MCF 10A (cell line): ENCODE measurements at regions of chr11 and their contacts with region 1.

Region 1: DNA sequence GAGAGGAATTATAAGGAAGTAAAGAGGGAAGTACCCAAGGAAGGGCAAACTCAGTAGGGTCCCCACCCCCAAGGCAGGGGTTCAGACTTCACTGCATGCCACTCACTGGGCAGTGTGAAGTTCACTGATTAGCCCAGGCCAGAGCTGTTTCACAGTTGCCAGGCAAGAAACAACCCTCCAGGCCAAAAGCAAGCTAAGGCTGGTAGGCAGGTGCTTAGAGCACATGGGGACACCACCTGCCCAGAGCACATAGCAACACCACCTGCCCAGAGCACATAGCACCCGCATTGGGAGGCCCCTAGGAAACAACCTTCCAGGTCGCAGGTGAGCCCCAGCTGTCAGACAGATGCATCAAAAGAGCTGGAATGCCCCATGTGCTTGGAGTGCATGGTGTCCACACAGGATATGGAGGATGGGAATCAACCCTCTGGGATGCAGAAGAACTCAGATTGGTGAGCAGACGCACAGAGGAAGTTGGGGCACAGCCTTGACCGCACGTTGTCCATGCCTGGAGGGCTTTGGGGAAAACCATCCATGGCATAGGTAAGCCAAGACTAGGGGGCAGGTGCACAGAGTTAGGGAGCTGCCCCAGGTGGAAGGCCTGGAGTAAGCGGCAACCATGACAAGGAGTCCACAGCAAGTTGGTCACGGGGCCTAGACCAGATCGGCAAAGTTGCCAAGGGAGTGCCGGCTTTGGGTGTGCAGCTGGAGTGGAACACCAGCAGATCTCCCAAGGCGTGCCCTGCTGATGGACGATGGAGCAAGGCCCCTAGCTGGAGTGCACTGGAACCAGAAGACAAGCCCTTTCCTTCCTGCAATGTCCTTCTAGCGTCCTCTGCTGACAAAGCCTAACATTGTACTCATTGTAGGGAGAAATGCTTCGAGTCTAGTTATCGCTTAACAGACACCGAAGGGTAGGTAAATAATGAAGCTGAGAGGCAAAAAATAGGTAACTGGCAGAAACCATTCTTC is 7.8 kb upstream of the TMEM216 start:
- DNase-seq: peak; percentile 61
- H3K4me3 Mint-ChIP-seq: no peak overlapping the region
- H3K27ac Mint-ChIP-seq: no peak overlapping the region
- H3K4me1 Mint-ChIP-seq: peaks cover 11% of the 10 kb centered on the region
- H3K27me3 Mint-ChIP-seq: no peaks in the 10 kb centered on the region
- CTCF ChIP-seq: peak; percentile 25

Region 2: GRCh38 chr11:61297746-61298145 is 86.8 kb before region 1 on chr11:
- CTCF ChIA-PET with region 1: interaction called, 3 read pairs
- POLR2A ChIA-PET with region 1: interaction called, 15 read pairs
- intact Hi-C with region 1: no loop called
- DNase-seq: peak; percentile 96
- H3K4me3 Mint-ChIP-seq: peak overlapping the region; percentile 35
- H3K27ac Mint-ChIP-seq: peak overlapping the region; percentile 91
- H3K4me1 Mint-ChIP-seq: peaks cover 28% of the 10 kb centered on the region
- H3K27me3 Mint-ChIP-seq: peaks cover 13% of the 10 kb centered on the region
- CTCF ChIP-seq: no peak

Region 3: DNA sequence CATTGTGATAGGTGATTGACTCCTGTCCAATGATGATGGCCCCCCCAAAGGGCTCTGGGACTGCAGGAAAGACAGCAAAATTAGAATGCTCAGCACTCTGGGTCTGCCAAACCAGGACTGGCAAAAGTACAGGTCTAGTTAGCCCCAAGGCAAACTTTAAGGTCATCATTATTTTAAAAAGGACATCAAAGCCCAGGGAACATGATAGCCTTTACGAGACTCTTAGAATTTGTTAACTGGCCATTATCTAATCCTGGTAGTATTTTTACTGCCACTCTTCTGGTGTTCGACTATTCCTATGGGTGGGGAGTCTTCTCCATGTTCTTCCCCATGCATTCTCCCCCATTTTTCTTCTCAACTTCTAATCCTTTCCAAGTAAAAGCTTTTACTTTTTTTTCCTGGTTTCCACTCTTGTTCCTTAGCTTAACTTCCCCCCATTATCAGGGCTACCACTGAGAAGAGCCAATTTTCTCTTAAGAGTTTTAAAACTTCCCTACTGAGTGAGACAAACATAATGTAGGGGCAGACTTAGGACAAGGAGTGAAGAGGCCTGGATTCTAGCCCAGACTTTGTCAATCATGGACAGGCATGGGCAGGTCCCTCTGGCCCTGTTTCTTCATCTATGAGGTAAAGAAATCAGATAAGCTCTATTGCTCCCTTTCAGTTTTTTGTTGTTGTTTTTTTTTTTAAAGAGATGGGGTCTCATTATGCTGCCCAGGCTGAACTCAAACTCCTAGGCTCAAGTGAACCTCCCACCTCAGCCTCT is 58.7 kb before region 1 on chr11:
- CTCF ChIA-PET with region 1: interaction called, 39 read pairs
- POLR2A ChIA-PET with region 1: interaction called, 220 read pairs
- intact Hi-C with region 1: no loop called
- DNase-seq: peak; percentile 81
- H3K4me3 Mint-ChIP-seq: peak overlapping the region; percentile 63
- H3K27ac Mint-ChIP-seq: peak overlapping the region; percentile 90
- H3K4me1 Mint-ChIP-seq: peaks cover 40% of the 10 kb centered on the region
- H3K27me3 Mint-ChIP-seq: no peaks in the 10 kb centered on the region
- CTCF ChIP-seq: no peak

Region 4: DNA sequence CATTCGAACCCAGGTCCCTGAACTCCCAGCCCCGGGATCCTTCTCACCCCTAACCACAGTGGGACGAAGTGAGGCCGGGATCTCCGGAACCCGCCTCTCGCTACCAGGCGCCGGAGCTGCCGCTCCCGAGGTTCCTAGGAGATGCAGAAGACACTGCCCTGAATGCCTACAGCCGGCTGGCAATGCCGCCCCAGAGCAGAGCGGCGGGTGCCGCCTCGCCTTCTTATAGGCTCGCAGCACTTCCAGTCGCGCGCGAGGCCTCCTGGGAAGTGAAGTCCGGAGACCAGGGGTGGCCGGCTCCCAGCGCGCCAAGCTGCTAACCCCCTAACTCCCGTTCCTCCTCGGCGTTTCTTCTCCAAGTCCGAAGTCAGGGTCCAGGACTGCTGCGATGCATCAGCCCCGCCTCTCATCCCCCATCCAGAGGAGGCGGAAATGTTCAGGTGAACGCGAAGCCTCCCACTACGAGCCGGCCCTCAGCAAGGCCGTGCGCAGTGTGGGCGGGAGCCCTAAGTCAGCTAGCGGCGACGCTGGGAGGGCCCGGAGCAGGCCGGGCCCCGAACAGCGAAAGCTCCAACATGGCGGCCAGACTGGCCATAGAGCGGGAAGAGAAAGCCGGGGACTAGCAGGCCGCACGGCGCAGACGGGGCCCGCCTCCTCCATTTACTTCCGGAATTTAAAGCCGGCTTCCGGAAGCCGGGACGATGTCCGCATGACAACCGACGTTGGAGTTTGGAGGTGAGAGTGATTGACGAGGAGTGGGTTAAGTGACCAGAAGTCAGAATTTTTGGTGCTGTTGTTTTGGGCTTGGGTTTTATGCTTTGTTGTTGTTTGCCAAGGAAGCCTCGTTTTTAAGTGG is 22.6 kb before region 1 on chr11 and contains the starts of genes CYB561A3 and TMEM138:
- CTCF ChIA-PET with region 1: interaction called, 294 read pairs
- POLR2A ChIA-PET with region 1: interaction called, 429 read pairs
- intact Hi-C with region 1: no loop called
- DNase-seq: peak; percentile 92
- H3K4me3 Mint-ChIP-seq: peak within 1 kb of the TSS; percentile 93
- H3K27ac Mint-ChIP-seq: peak within 1 kb of the TSS; percentile 94
- H3K4me1 Mint-ChIP-seq: peaks cover 19% of the 10 kb centered on the region
- H3K27me3 Mint-ChIP-seq: no peaks in the 10 kb centered on the region
- CTCF ChIP-seq: no peak
- total RNA-seq, gene CYB561A3: 28.4 and 28.8 TPM in 2 replicates
- total RNA-seq, gene TMEM138: 39.9 and 46.5 TPM in 2 replicates

Region 5: GRCh38 chr11:61516675-61517572 is 132.4 kb after region 1 on chr11:
- CTCF ChIA-PET with region 1: no interaction called
- POLR2A ChIA-PET with region 1: no interaction called
- intact Hi-C with region 1: no loop called
- DNase-seq: peak; percentile 30
- H3K4me3 Mint-ChIP-seq: no peak overlapping the region
- H3K27ac Mint-ChIP-seq: no peak overlapping the region
- H3K4me1 Mint-ChIP-seq: no peaks in the 10 kb centered on the region
- H3K27me3 Mint-ChIP-seq: no peaks in the 10 kb centered on the region
- CTCF ChIP-seq: peak; percentile 99

Region 6: DNA sequence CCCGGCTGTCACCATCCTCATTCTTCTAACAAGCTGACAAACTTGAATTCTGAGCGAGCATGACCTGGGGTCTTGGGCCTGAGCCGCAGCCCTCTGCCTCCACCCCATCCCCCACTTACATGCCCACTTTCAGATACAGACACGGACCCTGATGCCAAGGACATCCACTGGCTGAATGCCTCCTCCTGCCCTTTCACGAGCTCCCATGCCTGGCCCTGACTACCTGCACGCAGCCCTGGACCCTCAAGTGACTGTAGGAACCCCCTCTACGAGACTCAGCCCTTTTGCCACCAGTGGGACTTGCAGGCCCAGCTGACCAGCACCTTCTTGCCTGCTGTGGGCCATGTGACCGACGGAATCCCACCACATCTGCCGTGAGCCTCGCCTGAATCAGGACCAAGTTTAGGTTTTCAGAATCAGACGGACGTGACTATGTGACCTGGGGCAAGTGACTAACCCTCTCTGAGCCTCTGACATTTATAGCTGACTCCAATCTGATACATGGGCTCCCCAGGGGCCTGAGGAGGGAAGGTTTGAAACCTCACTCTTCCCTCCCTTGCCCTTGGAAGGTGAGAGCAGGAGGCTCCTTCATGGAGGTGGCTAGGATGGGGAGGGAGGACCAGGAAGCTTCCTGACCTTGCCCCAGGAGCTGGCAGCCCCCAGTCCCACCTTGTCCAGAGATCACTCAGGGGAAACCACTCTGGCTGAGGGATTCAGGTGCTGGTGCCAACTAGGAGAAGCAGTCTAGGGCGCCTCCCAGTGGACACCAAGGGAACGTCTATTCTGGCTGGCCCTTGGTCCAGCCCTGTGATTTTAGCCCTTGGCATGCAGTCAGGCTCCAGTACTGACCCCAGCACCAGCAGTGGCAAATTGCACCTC is 243.2 kb after region 1 on chr11:
- CTCF ChIA-PET with region 1: no interaction called
- POLR2A ChIA-PET with region 1: no interaction called
- intact Hi-C with region 1: no loop called
- DNase-seq: peak; percentile 75
- H3K4me3 Mint-ChIP-seq: no peak overlapping the region
- H3K27ac Mint-ChIP-seq: peak overlapping the region; percentile 54
- H3K4me1 Mint-ChIP-seq: peaks cover 12% of the 10 kb centered on the region
- H3K27me3 Mint-ChIP-seq: no peaks in the 10 kb centered on the region
- CTCF ChIP-seq: peak; percentile 94